ENCODE measurements at regions of chr19 and their contacts with region 1.

Region 1: DNA sequence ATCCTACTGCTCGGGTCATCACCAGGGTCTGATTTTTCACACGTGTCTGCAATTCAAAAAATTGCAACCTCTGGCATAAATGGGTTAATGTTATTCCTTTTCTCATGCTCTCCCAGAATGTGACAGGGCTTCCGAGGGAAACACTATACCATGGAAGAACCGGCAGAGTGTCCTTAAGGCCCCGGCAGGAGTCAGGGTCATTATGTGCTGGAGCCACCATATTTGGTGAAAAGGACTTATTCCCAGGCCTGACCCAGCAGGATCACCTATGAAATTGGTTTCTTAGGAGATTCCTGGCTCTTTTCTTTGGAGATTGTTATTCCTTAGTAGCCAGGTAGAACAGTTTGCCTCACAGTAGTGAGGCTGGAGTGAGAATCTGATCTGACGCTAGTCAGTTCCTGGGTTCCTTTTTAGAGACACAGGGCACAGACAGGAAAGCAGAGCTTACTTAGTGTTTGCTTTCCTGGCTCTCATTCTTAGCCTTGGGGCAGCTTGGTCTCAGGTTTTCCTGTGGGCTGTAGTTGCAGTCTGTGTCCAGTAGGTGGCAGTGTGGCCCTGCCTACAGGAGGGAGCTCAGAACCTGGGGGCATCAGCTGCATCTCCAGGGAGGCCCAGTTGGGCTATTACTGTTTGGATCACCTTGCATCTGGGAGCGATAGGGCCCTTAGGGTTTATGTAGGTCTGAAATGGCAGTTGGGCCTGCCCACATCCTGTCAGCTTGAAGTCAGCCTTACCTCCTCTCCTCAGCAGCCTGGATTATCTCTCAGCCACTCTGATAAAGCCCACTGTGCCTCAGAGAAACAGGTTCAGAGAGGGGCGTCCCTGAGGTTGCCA is 12.4 kb downstream of the SNRNP70 start:
- DNase-seq: peak; percentile 54 to 83 (median 81)
- ATAC-seq: peak; percentile 48 to 72
- H3K4me3 ChIP-seq: no peak overlapping the region
- H3K27ac ChIP-seq: no peak overlapping the region
- H3K4me1 ChIP-seq: no peaks in the 10 kb centered on the region
- H3K27me3 ChIP-seq: no peaks in the 10 kb centered on the region

Region 2: DNA sequence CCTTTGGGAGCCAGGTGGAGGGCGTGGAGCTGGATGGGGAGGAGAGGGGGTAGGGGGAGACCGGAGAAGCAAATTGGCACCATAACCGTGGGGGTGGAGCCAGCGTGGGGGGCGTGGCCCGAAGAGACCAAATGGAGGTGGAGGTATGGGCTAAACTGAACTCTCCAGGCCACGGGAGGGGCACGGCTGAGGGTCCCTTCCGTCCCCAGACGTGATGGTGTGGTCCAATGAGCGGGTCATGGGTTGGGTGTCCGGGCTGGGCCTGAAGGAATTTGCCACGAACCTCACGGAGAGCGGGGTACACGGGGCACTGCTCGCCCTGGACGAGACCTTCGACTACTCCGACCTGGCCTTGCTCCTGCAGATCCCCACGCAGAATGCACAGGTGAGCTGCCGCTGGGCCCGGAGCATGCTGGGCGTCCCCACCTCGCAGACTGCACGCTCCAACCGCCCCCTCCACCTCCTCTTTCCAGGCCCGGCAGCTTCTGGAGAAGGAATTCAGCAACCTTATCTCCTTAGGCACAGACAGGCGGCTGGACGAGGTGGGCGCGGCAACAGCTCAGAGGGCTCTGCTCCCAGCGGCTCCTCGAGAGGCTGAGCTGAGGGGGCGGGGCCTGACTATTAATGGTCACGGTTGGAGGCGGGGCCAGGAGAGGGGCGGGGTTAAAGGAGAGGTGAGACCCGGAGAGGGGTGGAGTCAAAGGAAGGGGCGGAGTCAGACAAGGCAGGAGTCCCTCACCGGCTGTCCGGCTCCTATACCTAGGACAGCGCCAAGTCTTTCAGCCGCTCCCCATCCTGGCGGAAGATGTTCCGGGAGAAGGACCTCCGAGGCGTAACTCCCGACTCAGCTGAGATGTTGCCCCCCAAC is 51.3 kb after region 1 on chr19:
- intact Hi-C with region 1: loop called in 3 of 4 experiments (anchors 5 to 10 kb)
- DNase-seq: peak; percentile 99 to 100 (median 99)
- ATAC-seq: peak; percentile 83 to 85
- H3K4me3 ChIP-seq: peak overlapping the region; percentile 66
- H3K27ac ChIP-seq: peak overlapping the region; percentile 85
- H3K4me1 ChIP-seq: peaks cover 2% of the 10 kb centered on the region
- H3K27me3 ChIP-seq: no peaks in the 10 kb centered on the region

Region 3: DNA sequence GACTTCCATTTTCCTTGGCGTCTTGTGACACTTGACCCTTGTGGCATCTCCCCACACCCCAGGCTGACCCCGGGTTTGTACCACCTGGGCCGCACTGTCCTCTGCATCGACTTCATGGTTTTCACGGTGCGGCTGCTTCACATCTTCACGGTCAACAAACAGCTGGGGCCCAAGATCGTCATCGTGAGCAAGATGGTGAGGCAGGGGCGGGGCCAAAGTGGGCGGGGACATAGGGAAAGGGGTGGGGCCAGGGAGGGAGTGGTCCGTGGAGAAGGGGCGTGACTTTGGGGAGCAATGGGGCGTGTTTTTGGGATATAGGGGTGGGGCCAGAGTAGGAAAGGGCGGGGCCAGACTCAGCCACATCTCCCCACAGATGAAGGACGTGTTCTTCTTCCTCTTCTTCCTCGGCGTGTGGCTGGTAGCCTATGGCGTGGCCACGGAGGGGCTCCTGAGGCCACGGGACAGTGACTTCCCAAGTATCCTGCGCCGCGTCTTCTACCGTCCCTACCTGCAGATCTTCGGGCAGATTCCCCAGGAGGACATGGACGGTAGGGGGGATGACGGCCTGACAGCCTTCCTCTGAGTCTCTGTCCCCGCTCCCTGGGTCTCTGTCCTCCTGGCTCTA is 102.7 kb after region 1 on chr19:
- intact Hi-C with region 1: loop called (anchors 5 to 10 kb)
- DNase-seq: peak in 1 of 3 donors; percentile 31
- ATAC-seq: peak; percentile 13 to 49
- H3K4me3 ChIP-seq: no peak overlapping the region
- H3K27ac ChIP-seq: no peak overlapping the region
- H3K4me1 ChIP-seq: no peaks in the 10 kb centered on the region
- H3K27me3 ChIP-seq: no peaks in the 10 kb centered on the region

Region 4: DNA sequence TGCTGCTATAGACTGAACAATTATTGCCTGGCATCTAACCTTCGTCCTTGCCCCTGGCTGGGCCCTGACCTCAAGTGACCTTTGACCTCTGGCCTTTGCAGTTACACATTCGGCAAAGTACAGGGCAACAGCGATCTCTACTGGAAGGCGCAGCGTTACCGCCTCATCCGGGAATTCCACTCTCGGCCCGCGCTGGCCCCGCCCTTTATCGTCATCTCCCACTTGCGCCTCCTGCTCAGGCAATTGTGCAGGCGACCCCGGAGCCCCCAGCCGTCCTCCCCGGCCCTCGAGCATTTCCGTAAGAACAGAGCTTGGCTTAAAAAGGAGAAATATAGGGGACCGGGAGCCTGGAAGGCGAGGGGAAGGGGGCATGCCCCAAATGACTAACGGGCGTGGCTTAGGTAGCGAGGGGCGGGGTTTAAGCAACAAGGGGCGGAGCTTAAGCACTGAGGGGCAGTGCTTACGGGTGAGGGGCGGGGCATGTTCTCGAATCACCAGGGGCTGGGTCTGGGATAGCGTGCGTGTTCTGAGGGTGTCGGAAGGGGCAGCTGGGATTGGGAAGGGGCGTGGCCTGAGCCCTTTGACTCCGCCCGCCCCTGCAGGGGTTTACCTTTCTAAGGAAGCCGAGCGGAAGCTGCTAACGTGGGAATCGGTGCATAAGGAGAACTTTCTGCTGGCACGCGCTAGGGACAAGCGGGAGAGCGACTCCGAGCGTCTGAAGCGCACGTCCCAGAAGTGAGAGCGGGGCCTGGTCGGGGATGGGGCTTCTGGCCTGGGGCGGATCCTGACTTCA is 112.6 kb after region 1 on chr19:
- intact Hi-C with region 1: loop called in 2 of 4 experiments (anchors 5 kb)
- DNase-seq: peak in 2 of 3 donors; percentile 65 to 68
- ATAC-seq: peak; percentile 59 to 70
- H3K4me3 ChIP-seq: no peak overlapping the region
- H3K27ac ChIP-seq: peak overlapping the region; percentile 36
- H3K4me1 ChIP-seq: no peaks in the 10 kb centered on the region
- H3K27me3 ChIP-seq: no peaks in the 10 kb centered on the region